Sciatic nerve (tissue), 2 donors: ENCODE measurements at regions of chr17 and their contacts with region 1.

Region 1: DNA sequence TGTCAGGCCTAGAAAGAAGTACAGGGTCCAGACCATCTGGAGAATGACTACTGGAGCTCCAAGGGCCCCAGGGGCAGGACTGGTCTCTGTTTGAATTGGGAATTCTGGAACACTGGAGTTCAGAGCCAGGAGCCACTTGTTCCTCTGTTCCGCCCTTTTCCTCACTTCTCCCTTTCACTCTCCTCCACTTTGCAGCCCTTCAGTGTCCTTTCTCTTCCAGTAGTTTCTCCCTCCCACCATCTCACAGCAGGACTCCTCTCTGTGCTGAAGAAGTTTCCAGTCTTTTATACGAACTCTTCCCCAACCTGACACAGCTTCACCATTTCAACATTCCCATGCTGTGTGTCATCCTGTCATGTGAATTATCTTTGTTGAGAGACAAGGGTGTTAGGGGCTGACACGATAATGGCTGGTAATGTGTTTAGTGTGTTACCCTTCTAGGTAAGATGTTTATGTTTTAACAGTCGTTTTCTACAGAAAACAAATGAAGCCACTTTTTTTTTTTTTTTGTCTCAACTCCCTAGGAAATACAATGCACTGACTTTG is 180.3 kb upstream of the MYOCD start:
- DNase-seq: no peak
- ATAC-seq: no peak

Region 2: GRCh38 chr17:12431188-12431587 is 54.2 kb before region 1 on chr17:
- intact Hi-C with region 1: loop called (anchors 2 kb)
- DNase-seq: no peak
- ATAC-seq: no peak